ENCODE measurements at regions of chr1 and their contacts with region 1.

Region 1: GRCh38 chr1:228165372-228166169 is at the start of gene IBA57:
- DNase-seq: peak; percentile 99 to 100 (median 100)
- ATAC-seq: peak; percentile 89
- H3K4me3 ChIP-seq: peak within 1 kb of the TSS; percentile 79
- H3K4me3 Mint-ChIP-seq: peak within 1 kb of the TSS; percentile 76 to 92 (median 88)
- H3K27ac ChIP-seq: peak within 1 kb of the TSS; percentile 97
- H3K27ac Mint-ChIP-seq: peak within 1 kb of the TSS; percentile 87 to 98 (median 98)
- H3K4me1 ChIP-seq: peaks cover 14 to 39% of the 10 kb centered on the region in 2 donors
- H3K4me1 Mint-ChIP-seq: peaks cover 10 to 65% (median 48%) of the 10 kb centered on the region in 7 donors
- H3K27me3 ChIP-seq: no peaks in the 10 kb centered on the region
- H3K27me3 Mint-ChIP-seq: no peaks in the 10 kb centered on the region
- total RNA-seq, gene IBA57: 9.3 to 17.1 (median 10.9) TPM

Region 2: GRCh38 chr1:227734856-227735538 is 430.6 kb before region 1 on chr1 and contains the starts of genes JMJD4 and SNAP47:
- CTCF ChIA-PET with region 1: no interaction called
- POLR2A ChIA-PET with region 1: no interaction called
- intact Hi-C with region 1: loop called in 1 of 2 experiments (anchors 5 kb)
- DNase-seq: peak; percentile 85 to 98 (median 93)
- ATAC-seq: peak; percentile 94
- H3K4me3 ChIP-seq: peak within 1 kb of the TSS; percentile 72
- H3K4me3 Mint-ChIP-seq: peak within 1 kb of the TSS; percentile 87 to 97 (median 90)
- H3K27ac ChIP-seq: peak within 1 kb of the TSS; percentile 87
- H3K27ac Mint-ChIP-seq: peak within 1 kb of the TSS; percentile 62 to 96 (median 89)
- H3K4me1 ChIP-seq: peaks cover 3 to 16% of the 10 kb centered on the region in 2 donors
- H3K4me1 Mint-ChIP-seq: peaks cover 28 to 59% (median 40%) of the 10 kb centered on the region in 7 donors
- H3K27me3 ChIP-seq: no peaks in the 10 kb centered on the region
- H3K27me3 Mint-ChIP-seq: no peaks in the 10 kb centered on the region
- total RNA-seq, gene JMJD4: 12.1 to 36.8 (median 26.3) TPM
- total RNA-seq, gene SNAP47: 18.5 to 31.8 (median 27.8) TPM

Region 3: DNA sequence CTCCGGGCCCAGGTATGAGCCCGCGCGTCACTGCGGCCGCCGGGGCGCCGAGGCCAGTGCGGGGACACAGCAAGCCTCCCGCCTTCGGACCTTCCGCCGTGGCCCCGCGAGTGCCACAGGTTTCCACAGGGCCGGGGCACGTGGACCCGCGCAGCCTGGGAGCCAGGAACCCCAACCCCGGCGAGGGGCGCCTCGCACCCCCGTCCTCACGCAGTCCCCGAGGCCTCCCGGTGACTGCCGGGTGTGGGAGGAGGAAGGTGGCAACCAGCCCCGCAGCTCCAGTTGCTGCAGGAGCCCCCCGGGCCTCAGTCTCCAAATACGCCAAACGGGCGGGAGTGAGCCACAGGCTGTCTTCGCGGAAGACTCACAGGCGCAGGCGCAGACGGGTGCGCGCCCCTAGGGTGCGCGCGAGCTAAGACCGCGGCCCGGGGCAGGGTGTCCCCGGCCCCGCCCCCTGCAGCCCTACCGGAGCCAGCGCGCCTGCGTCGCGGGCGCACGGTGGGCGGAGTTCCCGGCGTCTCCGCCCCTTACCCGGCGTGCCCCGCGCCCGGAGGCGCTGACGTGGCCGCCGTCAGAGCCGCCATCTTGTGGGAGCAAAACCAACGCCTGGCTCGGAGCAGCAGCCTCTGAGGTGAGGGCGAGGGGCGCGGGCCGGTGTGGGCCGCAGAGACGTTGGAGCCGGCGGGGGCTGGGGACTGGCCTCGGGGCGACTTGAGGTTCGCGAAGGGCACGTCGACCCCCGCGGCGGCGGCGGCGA is 83.3 kb before region 1 on chr1 and contains the start of gene ARF1:
- CTCF ChIA-PET with region 1: no interaction called
- POLR2A ChIA-PET with region 1: interaction called, 8 read pairs
- intact Hi-C with region 1: loop called (anchors 1 kb)
- DNase-seq: peak; percentile 89 to 99 (median 96)
- ATAC-seq: peak; percentile 97
- H3K4me3 ChIP-seq: peak within 1 kb of the TSS; percentile 88
- H3K4me3 Mint-ChIP-seq: peak within 1 kb of the TSS; percentile 89 to 97 (median 95)
- H3K27ac ChIP-seq: peak within 1 kb of the TSS; percentile 97
- H3K27ac Mint-ChIP-seq: peak within 1 kb of the TSS; percentile 76 to 97 (median 95)
- H3K4me1 ChIP-seq: peaks cover 41 to 43% of the 10 kb centered on the region in 2 donors
- H3K4me1 Mint-ChIP-seq: peaks cover 36 to 66% (median 52%) of the 10 kb centered on the region in 7 donors
- H3K27me3 ChIP-seq: no peaks in the 10 kb centered on the region
- H3K27me3 Mint-ChIP-seq: no peaks in the 10 kb centered on the region
- total RNA-seq, gene ARF1: 198 to 390 (median 259) TPM

Region 4: GRCh38 chr1:228131766-228132165 is 33.8 kb before region 1 on chr1:
- CTCF ChIA-PET with region 1: interaction called, 34 read pairs
- POLR2A ChIA-PET with region 1: interaction called, 109 read pairs
- intact Hi-C with region 1: loop called (anchors 1 kb)
- DNase-seq: peak in 1 of 9 donors; percentile 6
- ATAC-seq: no peak
- H3K4me3 ChIP-seq: no peak overlapping the region
- H3K4me3 Mint-ChIP-seq: no peak overlapping the region
- H3K27ac ChIP-seq: no peak overlapping the region
- H3K27ac Mint-ChIP-seq: no peak overlapping the region
- H3K4me1 ChIP-seq: peaks cover 0 to 11% of the 10 kb centered on the region in 2 donors
- H3K4me1 Mint-ChIP-seq: peaks cover 0 to 11% (median 7%) of the 10 kb centered on the region in 7 donors
- H3K27me3 ChIP-seq: no peaks in the 10 kb centered on the region
- H3K27me3 Mint-ChIP-seq: peaks cover 0 to 53% (median 9%) of the 10 kb centered on the region in 5 donors

Region 5: DNA sequence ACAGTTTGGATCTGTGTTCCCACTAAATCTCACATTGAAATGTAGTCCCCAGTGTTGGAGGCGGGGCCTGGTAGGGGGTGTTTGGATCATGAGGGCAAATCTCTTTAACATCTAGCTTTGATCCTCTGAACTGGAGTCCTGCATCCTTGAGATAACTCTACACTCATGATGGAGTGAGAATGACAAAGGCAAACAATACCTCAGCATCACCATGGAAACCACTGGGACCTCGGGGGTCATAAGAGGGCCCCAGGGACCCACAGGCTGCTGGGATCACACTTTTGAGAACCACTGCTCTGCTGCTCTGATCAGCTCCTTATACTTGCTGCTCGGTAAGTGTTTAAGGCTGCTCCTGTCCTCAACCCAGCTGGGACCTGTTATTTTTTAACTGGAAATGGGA is 28.9 kb after region 1 on chr1:
- CTCF ChIA-PET with region 1: no interaction called
- POLR2A ChIA-PET with region 1: no interaction called
- intact Hi-C with region 1: no loop called
- DNase-seq: no peak
- ATAC-seq: no peak
- H3K4me3 ChIP-seq: no peak overlapping the region
- H3K4me3 Mint-ChIP-seq: no peak overlapping the region
- H3K27ac ChIP-seq: no peak overlapping the region
- H3K27ac Mint-ChIP-seq: no peak overlapping the region
- H3K4me1 ChIP-seq: no peaks in the 10 kb centered on the region
- H3K4me1 Mint-ChIP-seq: no peaks in the 10 kb centered on the region
- H3K27me3 ChIP-seq: no peaks in the 10 kb centered on the region
- H3K27me3 Mint-ChIP-seq: no peaks in the 10 kb centered on the region

Region 6: GRCh38 chr1:228212966-228213844 is 47.6 kb after region 1 on chr1:
- CTCF ChIA-PET with region 1: no interaction called
- POLR2A ChIA-PET with region 1: interaction called, 4 read pairs
- intact Hi-C with region 1: loop called (anchors 1 kb)
- DNase-seq: peak; percentile 71 to 88 (median 82)
- ATAC-seq: peak; percentile 95
- H3K4me3 ChIP-seq: peak overlapping the region; percentile 68
- H3K4me3 Mint-ChIP-seq: peak overlapping the region; percentile 77 to 95 (median 91)
- H3K27ac ChIP-seq: peak overlapping the region; percentile 73
- H3K27ac Mint-ChIP-seq: peak overlapping the region; percentile 28 to 96 (median 88)
- H3K4me1 ChIP-seq: no peaks in the 10 kb centered on the region
- H3K4me1 Mint-ChIP-seq: peaks cover 3 to 13% (median 5%) of the 10 kb centered on the region in 7 donors
- H3K27me3 ChIP-seq: no peaks in the 10 kb centered on the region
- H3K27me3 Mint-ChIP-seq: no peaks in the 10 kb centered on the region

Region 7: DNA sequence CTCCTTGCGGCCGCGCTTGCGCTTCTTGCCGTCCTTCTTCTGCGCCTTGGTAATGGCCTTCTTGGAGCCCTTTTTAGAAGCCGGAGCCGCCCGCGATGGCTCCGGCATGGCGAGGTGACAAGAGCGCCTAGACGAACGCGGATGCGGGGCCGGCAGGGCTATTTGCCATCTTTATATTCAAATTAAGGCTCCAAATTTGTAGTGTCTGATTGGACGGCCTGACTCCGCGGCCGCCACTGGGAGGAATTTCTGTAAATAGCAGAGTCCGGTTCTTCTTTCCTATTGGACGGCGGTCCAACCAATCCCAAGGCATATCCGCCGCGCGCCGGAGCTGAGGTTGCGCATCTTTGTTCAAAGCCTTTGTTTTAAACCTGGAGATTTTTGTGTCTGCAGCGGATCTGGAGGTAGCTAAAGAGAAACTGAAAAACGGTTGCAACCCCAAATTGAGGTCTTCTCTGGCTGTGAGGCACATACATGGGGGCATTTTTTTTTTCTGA is 299.0 kb after region 1 on chr1:
- CTCF ChIA-PET with region 1: no interaction called
- POLR2A ChIA-PET with region 1: no interaction called
- intact Hi-C with region 1: loop called (anchors 2 kb)
- DNase-seq: peak; percentile 56 to 93 (median 85)
- ATAC-seq: peak; percentile 98
- H3K4me3 ChIP-seq: peak overlapping the region; percentile 62
- H3K4me3 Mint-ChIP-seq: peak overlapping the region; percentile 73 to 93 (median 82)
- H3K27ac ChIP-seq: peak overlapping the region; percentile 50
- H3K27ac Mint-ChIP-seq: peak overlapping the region; percentile 13 to 92 (median 62)
- H3K4me1 ChIP-seq: peaks cover 17 to 18% of the 10 kb centered on the region in 2 donors
- H3K4me1 Mint-ChIP-seq: peaks cover 24 to 66% (median 40%) of the 10 kb centered on the region in 7 donors
- H3K27me3 ChIP-seq: no peaks in the 10 kb centered on the region
- H3K27me3 Mint-ChIP-seq: peaks cover 11 to 34% (median 24%) of the 10 kb centered on the region in 5 donors

Measured in naive thymus-derived CD4-positive, alpha-beta T cell (primary cell).